Naive thymus-derived CD8-positive, alpha-beta T cell (primary cell): ENCODE measurements at regions of chr5 and their contacts with region 1.

Region 1: GRCh38 chr5:35803191-35803651 is 53.5 kb upstream of the IL7R start:
- DNase-seq: peak in 4 of 10 donors; percentile 24 to 63 (median 38)
- ATAC-seq: peak; percentile 64 to 66
- H3K4me3 Mint-ChIP-seq: peak overlapping the region in 8 of 10 donors; percentile 12 to 77 (median 50)
- H3K27ac Mint-ChIP-seq: peak overlapping the region; percentile 73 to 94 (median 84)
- H3K4me1 Mint-ChIP-seq: peaks cover 38 to 66% (median 63%) of the 10 kb centered on the region in 4 donors
- H3K27me3 Mint-ChIP-seq: no peaks in the 10 kb centered on the region

Region 2: DNA sequence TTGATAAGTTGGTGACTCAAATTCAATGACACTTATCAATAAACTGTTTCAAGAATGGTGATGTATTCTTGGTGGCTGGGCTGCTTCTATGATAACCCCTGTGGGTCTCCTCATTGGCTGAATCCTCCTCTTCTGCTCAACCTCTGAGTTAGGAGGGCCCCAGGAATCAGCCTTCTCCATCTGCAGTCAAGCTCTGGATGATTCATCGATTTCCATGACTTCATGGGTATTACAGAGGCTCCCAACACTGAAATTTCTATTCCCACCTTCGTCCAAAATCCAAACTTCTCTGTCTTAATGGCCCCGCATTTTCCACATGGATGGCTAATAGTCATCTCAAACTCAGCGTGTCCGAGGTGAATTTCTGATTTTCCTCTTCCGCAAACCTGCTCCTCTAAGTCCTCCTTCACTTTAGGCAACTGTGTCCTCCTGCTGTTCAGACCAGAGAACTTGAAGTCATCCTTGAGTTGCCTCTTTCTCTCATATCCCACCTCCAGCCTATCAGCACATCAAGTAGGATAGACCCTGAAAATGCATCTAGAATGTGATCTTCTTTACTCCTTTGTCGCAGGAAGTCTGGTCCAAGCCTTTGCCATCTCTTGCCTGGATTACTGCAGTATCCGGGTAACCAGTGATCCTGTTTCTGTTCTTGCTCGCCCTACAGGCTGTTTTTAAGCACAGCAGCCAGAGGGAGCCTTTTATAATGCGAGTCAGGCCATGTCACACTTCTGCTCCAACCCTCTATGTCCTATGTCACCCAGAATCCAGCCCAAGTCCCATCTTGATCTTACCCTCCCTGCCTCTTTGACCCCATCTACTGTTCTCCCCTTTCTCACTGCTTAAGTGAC is 12.1 kb after region 1 on chr5:
- POLR2A ChIA-PET with region 1: interaction called, 82 read pairs
- DNase-seq: peak in 3 of 10 donors; percentile 27 to 65 (median 33)
- ATAC-seq: no peak
- H3K4me3 Mint-ChIP-seq: no peak overlapping the region
- H3K27ac Mint-ChIP-seq: no peak overlapping the region
- H3K4me1 Mint-ChIP-seq: peaks cover 19 to 53% (median 35%) of the 10 kb centered on the region in 4 donors
- H3K27me3 Mint-ChIP-seq: no peaks in the 10 kb centered on the region

Region 3: DNA sequence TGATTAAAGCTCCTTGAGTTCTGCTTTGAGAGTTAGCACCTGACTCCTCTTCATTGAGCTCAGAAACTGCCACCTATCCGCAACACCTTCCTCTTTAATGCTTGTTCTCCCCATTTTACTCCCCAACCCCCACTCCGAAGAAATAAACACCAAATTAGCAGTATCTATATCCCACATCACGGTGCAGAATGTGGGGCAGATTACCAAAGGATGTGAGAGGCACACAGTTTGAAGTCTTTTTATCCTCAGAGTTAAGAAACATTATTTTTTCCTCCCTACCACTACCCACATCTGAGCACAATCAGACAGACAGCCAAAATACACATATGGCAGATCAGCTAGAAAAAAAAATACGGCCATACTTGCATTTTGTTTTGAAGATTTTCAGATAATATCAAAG is 27.4 kb after region 1 on chr5:
- POLR2A ChIA-PET with region 1: interaction called, 10 read pairs
- DNase-seq: peak in 8 of 10 donors; percentile 52 to 91 (median 70)
- ATAC-seq: peak; percentile 88 to 95
- H3K4me3 Mint-ChIP-seq: peak overlapping the region; percentile 37 to 83 (median 63)
- H3K27ac Mint-ChIP-seq: peak overlapping the region in 9 of 10 donors; percentile 23 to 95 (median 92)
- H3K4me1 Mint-ChIP-seq: peaks cover 41 to 94% (median 89%) of the 10 kb centered on the region in 4 donors
- H3K27me3 Mint-ChIP-seq: no peaks in the 10 kb centered on the region

Region 4: DNA sequence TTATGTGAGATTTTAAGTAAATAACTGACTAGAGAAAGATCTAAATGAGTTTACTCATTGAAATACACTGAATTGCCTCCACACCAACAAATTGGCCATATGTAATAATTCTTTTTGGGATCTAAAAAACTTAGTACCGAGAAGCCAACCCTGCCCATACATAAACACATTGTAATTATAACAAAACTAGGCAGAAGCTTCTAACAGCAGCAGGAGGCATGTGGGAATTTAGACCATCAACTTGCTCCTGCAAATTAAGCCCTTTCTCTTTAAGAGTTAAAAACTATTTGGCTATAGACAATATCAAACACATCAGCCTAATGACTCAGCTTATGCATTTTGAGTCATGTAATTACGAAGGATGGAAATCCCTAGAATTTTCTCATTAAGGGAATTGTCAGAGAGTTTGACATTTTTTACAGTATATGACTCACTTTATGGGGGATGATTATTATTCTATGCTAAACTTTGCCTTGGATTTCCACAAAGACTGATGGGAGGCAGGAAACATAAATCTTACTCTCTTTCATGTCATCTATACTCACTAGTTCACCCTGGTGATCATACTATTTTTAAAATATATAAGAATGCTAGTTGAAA is 54.5 kb after region 1 on chr5:
- POLR2A ChIA-PET with region 1: interaction called, 100 read pairs
- DNase-seq: peak in 3 of 10 donors; percentile 41 to 45 (median 41)
- ATAC-seq: no peak
- H3K4me3 Mint-ChIP-seq: peak overlapping the region; percentile 83 to 97 (median 94)
- H3K27ac Mint-ChIP-seq: peak overlapping the region; percentile 95 to 100 (median 100)
- H3K4me1 Mint-ChIP-seq: peaks cover 42 to 63% (median 59%) of the 10 kb centered on the region in 4 donors
- H3K27me3 Mint-ChIP-seq: no peaks in the 10 kb centered on the region

Region 5: GRCh38 chr5:35890021-35890696 is 86.9 kb after region 1 on chr5:
- POLR2A ChIA-PET with region 1: no interaction called
- DNase-seq: no peak
- ATAC-seq: no peak
- H3K4me3 Mint-ChIP-seq: no peak overlapping the region
- H3K27ac Mint-ChIP-seq: no peak overlapping the region
- H3K4me1 Mint-ChIP-seq: peaks cover 0 to 5% (median under 1%) of the 10 kb centered on the region in 4 donors
- H3K27me3 Mint-ChIP-seq: no peaks in the 10 kb centered on the region